ENCODE measurements at regions of chr21 and their contacts with region 1.

Region 1: GRCh38 chr21:44792702-44793591 is 8.7 kb downstream of the UBE2G2 start:
- ATAC-seq: peak; percentile 74 to 98 (median 96)
- H3K4me3 ChIP-seq: no peak overlapping the region
- H3K27ac ChIP-seq: no peak overlapping the region
- H3K4me1 ChIP-seq: peaks cover 3 to 6% of the 10 kb centered on the region in 2 donors

Region 2: GRCh38 chr21:44255519-44255981 is 537.4 kb before region 1 on chr21:
- in situ Hi-C with region 1: no loop called
- ATAC-seq: peak in 4 of 8 experiments; percentile 43 to 71 (median 54)
- H3K4me3 ChIP-seq: no peak overlapping the region
- H3K27ac ChIP-seq: no peak overlapping the region
- H3K4me1 ChIP-seq: no peaks in the 10 kb centered on the region

Region 3: DNA sequence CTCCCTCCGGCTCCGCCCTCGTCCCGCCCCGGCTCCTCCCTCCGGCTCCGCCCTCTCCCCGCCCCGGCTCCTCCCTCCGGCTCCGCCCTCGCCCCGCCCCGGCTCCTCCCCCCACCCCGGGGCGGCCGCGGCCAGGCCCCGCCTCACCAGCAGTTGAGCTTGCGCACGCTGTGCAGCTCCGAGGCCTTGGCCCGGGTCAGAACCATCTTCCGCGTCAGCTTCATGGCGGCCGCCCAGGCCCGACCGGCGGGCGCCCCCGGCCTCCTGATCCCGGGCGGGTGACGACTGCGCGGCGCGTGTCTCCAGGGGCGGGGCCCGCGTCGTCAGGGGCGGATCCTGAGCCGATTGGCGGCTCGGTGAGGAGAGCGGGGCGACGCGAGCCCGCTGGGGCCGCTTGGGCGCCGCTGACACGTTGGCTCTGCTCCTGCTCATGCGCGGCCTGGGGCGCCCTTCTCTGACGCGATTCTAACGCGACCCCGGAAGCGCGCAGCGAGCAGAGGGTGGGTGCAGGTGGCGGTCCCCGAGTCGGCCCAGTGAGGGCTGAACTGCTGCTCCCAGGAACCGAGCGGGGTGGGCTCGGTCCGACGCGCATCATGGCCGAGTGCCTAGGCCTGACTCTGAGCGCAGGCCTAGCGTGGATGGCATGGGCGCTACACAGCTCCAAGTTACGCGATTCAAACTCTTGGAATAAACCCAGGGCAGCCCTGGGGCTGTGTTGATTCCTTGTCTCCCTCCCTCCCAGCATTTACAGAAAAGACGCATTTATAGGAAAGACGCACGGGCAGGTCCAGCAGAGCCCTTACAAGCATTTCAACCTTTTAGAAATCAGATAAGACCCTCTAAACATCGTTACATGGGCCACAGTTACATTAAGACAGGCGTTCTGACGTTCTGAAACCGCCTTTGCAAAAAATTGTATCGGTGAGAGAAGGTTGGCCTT is 453.7 kb before region 1 on chr21 and contains the start of gene CFAP410:
- in situ Hi-C with region 1: loop called in 1 of 9 experiments (anchors 25 kb)
- ATAC-seq: peak; percentile 83 to 92 (median 86)
- H3K4me3 ChIP-seq: peak within 1 kb of the TSS; percentile 49 to 64 (median 54)
- H3K27ac ChIP-seq: peak within 1 kb of the TSS; percentile 100
- H3K4me1 ChIP-seq: peaks cover 11 to 19% of the 10 kb centered on the region in 2 donors
- total RNA-seq, gene CFAP410: 12.5 to 19.0 (median 16.7) TPM

Region 4: GRCh38 chr21:44487831-44488230 is 305.1 kb before region 1 on chr21:
- in situ Hi-C with region 1: loop called in 1 of 9 experiments (anchors 25 kb)
- ATAC-seq: peak in 2 of 8 experiments; percentile 35 to 42
- H3K4me3 ChIP-seq: no peak overlapping the region
- H3K27ac ChIP-seq: no peak overlapping the region
- H3K4me1 ChIP-seq: no peaks in the 10 kb centered on the region

Region 5: DNA sequence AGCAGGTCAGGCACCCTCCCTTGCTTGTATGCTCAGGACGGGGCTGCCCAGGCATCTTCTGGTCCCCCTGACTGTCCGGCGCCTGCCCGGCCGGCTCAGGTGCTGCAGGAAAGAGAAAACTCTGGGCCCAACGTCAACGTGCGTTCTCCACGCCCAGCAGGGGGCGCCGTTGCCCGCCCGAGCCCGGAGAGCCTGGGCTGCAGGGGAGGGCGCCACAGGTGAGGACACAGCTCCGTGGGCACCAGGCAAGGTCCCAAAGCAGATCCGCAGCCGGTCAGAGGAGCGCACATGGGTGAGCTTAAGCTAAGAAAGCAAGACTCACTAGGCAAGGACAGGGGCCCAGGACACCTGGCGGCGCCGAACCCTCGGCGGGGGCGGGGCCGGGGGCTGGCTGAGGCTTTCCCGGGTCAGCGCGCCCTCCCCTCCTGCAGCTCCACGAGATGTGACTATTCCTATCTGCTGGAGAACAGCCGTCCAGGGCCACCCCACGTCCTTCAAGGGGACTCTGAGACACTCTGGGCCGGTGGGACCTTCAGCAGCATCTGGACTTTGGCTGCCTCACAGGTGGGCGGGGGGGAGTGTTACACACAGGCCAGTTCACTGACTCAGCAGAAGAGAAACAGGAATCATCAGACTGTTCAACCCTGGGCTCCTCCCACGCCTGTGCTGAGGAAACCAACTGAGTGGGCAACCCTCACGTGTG is 282.3 kb before region 1 on chr21:
- in situ Hi-C with region 1: loop called in 4 of 9 experiments (anchors 25 kb)
- ATAC-seq: peak; percentile 68 to 91 (median 79)
- H3K4me3 ChIP-seq: no peak overlapping the region
- H3K27ac ChIP-seq: no peak overlapping the region
- H3K4me1 ChIP-seq: peaks cover 6 to 7% of the 10 kb centered on the region in 2 donors

Region 6: GRCh38 chr21:44736291-44737004 is 56.5 kb before region 1 on chr21:
- in situ Hi-C with region 1: no loop called
- ATAC-seq: peak in 4 of 8 experiments; percentile 29 to 98 (median 72)
- H3K4me3 ChIP-seq: no peak overlapping the region
- H3K27ac ChIP-seq: no peak overlapping the region
- H3K4me1 ChIP-seq: no peaks in the 10 kb centered on the region

Region 7: DNA sequence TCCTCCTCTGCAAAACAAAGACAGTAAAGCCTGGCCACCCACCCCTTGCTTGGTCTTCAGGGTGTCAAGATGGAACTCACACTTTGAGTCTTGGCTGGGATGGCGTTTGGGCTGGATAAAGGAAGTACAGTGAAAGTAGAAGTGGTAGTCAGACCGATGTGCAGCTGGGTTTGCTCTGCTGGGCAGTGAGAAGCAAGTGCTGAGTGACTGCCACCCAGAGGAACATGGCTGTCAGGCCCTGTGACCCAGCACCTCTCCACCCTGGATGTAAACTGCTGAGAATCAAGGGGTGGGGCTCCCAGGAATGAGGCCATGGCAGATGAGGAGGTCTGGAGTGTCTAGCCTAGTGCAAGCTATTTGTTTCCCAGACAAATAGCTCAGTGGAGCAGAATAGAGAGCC is 443.5 kb after region 1 on chr21:
- in situ Hi-C with region 1: no loop called
- ATAC-seq: peak in 5 of 8 experiments; percentile 8 to 98 (median 26)
- H3K4me3 ChIP-seq: no peak overlapping the region
- H3K27ac ChIP-seq: no peak overlapping the region
- H3K4me1 ChIP-seq: no peaks in the 10 kb centered on the region

Measured in motor neuron (in vitro differentiated cells).